ENCODE measurements at regions of chr2 and their contacts with region 1.

Region 1: DNA sequence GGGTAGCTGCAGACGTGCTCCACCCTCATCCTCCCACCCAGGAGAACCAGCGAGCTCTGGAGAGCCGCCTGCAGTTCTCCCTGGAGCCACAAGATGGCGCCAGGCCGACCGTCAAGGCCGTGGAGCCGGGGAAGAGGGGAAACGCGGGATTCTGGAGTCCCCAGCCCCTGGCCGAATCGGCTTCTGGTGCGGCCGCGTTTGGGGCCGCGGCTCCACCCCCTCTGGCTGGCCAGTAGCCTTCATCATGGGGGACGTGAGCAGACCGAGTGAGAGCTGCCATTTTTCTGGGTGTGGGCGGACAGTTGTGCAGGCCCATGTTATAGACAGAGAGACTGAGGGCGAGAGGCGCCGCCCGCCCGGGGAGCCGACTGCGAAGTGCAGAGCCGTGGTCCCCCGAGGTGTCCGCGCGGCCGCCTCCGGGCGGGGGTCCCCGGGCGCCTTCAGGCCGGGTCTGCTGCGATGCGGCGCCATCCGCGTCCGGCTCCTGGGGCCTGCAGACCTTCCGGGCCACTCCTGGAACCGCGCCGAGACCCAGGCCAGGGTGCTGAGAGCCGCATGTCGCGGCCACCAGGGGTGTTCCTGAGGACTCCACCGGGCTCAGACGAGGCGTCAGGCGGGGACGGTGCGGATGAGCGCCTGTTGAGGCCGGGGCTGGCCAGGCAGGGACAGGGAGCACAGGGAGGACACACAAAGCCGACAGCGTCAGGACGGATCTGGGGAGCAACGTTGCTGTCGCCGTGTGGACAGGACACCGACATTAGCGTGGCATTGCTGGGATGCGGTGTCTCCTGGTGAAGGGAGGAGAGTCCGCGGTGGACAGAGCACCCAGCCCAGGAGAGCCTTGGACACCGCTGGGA is 418.2 kb upstream of the HS6ST1 start:
- DNase-seq: peak; percentile 70 to 90 (median 84)
- H3K4me3 ChIP-seq: peak overlapping the region in 1 of 4 donors; percentile 37
- H3K27ac ChIP-seq: no peak overlapping the region
- H3K4me1 ChIP-seq: peaks cover 9 to 28% of the 10 kb centered on the region in 2 donors
- H3K27me3 ChIP-seq: no peaks in the 10 kb centered on the region
- CTCF ChIP-seq: peak; percentile 92 to 99 (median 96)
- POLR2A ChIP-seq: no peak

Region 2: GRCh38 chr2:128178650-128179460 is 558.1 kb before region 1 on chr2:
- intact Hi-C with region 1: loop called in 1 of 2 experiments (anchors 10 kb)
- DNase-seq: peak; percentile 38 to 82 (median 67)
- H3K4me3 ChIP-seq: no peak overlapping the region
- H3K27ac ChIP-seq: peak overlapping the region in 4 of 5 donors; percentile 24 to 79 (median 71)
- H3K4me1 ChIP-seq: peaks cover 6 to 16% of the 10 kb centered on the region in 2 donors
- H3K27me3 ChIP-seq: no peaks in the 10 kb centered on the region
- CTCF ChIP-seq: peak; percentile 41 to 78 (median 68)
- POLR2A ChIP-seq: no peak

Region 3: DNA sequence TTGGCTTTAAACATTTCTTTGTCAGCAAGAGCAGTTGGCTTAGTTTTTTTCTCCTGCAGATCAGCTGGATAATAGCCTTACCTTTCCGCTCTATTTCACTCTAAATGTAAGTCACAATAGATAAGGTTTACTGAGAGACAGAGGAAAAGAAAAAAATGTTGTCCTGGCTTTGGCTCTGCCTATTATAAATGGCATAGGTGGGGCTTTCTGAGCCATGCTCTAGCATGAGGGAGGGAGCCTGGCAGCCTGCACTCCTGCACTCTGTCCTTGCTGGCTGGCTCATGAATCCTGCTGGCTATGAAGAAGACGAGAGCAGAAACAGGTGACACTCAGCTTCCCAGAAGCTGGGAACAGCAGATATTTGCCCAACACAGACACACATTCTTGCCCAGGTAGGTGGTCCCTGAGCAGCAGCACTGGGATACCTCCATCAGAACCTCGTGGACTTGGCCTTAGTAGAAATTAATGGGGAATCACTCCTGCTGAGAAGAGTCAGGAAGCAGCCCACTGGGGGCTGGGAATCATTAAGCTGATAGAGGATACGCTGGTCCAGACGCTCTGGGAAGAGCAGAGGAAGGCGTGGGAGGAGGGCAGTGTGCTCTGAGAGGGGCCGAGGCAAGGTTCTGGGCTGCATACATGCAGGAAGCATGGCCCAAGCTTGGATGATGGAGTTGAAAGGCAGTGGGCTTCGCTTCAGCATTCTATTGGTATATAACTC is 96.2 kb after region 1 on chr2:
- intact Hi-C with region 1: no loop called
- DNase-seq: peak in 1 of 7 donors; percentile 18
- H3K4me3 ChIP-seq: no peak overlapping the region
- H3K27ac ChIP-seq: no peak overlapping the region
- H3K4me1 ChIP-seq: no peaks in the 10 kb centered on the region
- H3K27me3 ChIP-seq: no peaks in the 10 kb centered on the region
- CTCF ChIP-seq: no peak
- POLR2A ChIP-seq: no peak

Region 4: DNA sequence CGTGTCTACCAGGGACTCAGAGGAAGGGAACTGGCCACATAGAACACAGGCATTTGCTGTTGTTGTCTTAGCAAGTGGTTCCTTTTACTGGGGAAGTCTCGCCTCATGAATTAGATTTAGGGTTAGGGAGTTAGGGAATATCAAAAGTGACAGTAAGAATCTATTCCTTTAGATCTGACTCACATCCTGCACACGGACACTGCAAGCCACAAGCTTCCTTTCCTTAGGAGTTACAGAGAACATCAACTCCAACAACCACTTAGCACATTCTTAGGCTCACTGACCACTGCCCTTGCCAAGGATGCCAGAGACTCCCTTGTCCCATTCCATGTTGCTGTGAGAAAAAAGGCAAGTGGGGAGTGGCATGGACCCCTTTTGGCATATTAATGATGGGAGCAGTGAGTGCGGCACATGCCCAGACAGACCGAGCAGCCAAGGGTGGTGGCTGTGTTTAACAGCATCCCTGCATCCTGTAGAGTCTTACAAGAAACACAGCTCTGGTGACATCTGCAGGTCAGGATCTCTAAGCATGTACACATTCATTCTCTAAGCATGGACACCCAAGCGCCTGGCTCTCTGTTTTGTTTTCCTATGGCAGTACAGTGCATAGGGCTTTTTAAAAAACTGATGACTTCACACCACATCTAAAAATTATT is 497.0 kb after region 1 on chr2:
- intact Hi-C with region 1: no loop called
- DNase-seq: peak in 2 of 7 donors; percentile 28 to 44
- H3K4me3 ChIP-seq: no peak overlapping the region
- H3K27ac ChIP-seq: no peak overlapping the region
- H3K4me1 ChIP-seq: no peaks in the 10 kb centered on the region
- H3K27me3 ChIP-seq: no peaks in the 10 kb centered on the region
- CTCF ChIP-seq: peak in 2 of 6 experiments; percentile 22 to 27
- POLR2A ChIP-seq: no peak